Gastrocnemius medialis (tissue), 4 donors: ENCODE measurements at regions of chr13 and their contacts with region 1.

Region 1: DNA sequence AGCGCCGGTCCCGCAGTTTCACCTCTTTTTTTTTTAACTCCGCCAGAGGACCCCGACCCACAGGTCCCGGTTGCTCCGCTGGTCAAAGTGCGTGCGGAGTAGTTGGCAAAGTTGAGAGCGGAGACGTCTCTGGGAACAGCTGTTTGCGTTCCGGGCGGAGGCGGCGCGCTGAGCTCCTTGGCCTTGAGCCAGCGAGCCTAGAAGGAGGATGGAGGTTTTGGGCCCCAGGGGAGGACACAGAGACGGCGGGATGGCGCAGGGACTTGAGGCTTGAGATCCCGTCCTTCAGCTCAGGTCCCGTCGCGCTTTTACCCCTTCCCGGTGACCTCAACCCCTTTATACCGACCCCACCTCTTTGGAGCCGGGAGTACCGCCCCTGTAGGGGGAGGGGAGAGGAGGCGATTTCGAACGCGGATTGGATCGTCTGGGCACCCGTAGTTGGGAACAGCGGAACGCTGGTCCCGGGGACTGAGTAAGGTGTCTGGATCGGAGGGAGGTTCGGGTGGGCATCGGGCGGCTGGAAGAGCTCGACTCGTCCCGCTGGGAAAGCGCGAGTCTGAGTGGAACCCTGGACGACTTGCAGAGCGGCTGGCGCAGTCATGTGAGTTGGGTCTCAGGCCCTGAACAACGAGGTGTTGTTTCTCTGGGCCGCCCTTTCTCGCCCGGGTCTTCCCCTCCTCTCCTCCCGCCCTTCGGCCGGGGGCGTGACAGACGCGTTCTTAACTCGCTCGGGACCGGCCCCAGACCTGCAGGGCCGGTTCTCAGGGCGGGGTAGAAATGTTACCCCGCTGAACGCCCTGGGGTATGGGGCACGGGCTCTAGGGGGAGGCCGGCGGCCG is at the start of gene WBP4:
- DNase-seq: peak; percentile 91 to 93
- ATAC-seq: peak; percentile 74 to 76
- H3K4me3 ChIP-seq: peak within 1 kb of the TSS; percentile 71 to 90 (median 86)
- H3K27ac ChIP-seq: peak within 1 kb of the TSS; percentile 90 to 100 (median 98)
- H3K4me1 ChIP-seq: peaks cover 64 to 67% of the 10 kb centered on the region in 2 donors
- H3K27me3 ChIP-seq: no peaks in the 10 kb centered on the region
- CTCF ChIP-seq: peak in 2 of 5 experiments; percentile 3 to 24
- POLR2A ChIP-seq: peak; percentile 74 to 80
- total RNA-seq, gene WBP4: 20.2 to 31.3 (median 25.5) TPM

Region 2: GRCh38 chr13:40770934-40771618 is 290.2 kb before region 1 on chr13 and contains the start of gene MRPS31:
- in situ Hi-C with region 1: loop called in 1 of 4 experiments (anchors 25 kb)
- intact Hi-C with region 1: loop called (anchors 5 kb)
- DNase-seq: peak; percentile 89 to 94
- ATAC-seq: peak; percentile 93 to 97
- H3K4me3 ChIP-seq: peak within 1 kb of the TSS; percentile 74 to 95 (median 90)
- H3K27ac ChIP-seq: peak within 1 kb of the TSS; percentile 77 to 93 (median 90)
- H3K4me1 ChIP-seq: peaks cover 12 to 23% of the 10 kb centered on the region in 2 donors
- H3K27me3 ChIP-seq: no peaks in the 10 kb centered on the region
- CTCF ChIP-seq: peak in 2 of 5 experiments; percentile 11 to 30
- POLR2A ChIP-seq: peak; percentile 55 to 61
- total RNA-seq, gene MRPS31: 21.0 to 29.5 (median 24.8) TPM

Region 3: GRCh38 chr13:40974460-40975407 is 86.6 kb before region 1 on chr13:
- in situ Hi-C with region 1: loop called in 1 of 4 experiments (anchors 10 kb)
- intact Hi-C with region 1: loop called (anchors 2 kb)
- DNase-seq: peak in 1 of 2 donors; percentile 21
- ATAC-seq: peak; percentile 57 to 93
- H3K4me3 ChIP-seq: peak overlapping the region in 1 of 4 donors; percentile 3
- H3K27ac ChIP-seq: peak overlapping the region in 2 of 4 donors; percentile 3 to 22
- H3K4me1 ChIP-seq: peaks cover 70 to 92% of the 10 kb centered on the region in 2 donors
- H3K27me3 ChIP-seq: no peaks in the 10 kb centered on the region
- CTCF ChIP-seq: peak in 4 of 5 experiments; percentile 24 to 52 (median 35)
- POLR2A ChIP-seq: no peak

Region 4: GRCh38 chr13:41132512-41133152 is 71.3 kb after region 1 on chr13 and contains the start of gene KBTBD6:
- in situ Hi-C with region 1: loop called in 1 of 4 experiments (anchors 5 kb)
- intact Hi-C with region 1: loop called (anchors 1 kb)
- DNase-seq: peak; percentile 95 to 96
- ATAC-seq: peak; percentile 97
- H3K4me3 ChIP-seq: peak within 1 kb of the TSS; percentile 81 to 88 (median 83)
- H3K27ac ChIP-seq: peak within 1 kb of the TSS; percentile 92 to 94 (median 94)
- H3K4me1 ChIP-seq: peaks cover 47 to 50% of the 10 kb centered on the region in 2 donors
- H3K27me3 ChIP-seq: no peaks in the 10 kb centered on the region
- CTCF ChIP-seq: no peak
- POLR2A ChIP-seq: peak; percentile 65 to 72
- total RNA-seq, gene KBTBD6: 3.7 to 6.1 (median 5.3) TPM

Region 5: DNA sequence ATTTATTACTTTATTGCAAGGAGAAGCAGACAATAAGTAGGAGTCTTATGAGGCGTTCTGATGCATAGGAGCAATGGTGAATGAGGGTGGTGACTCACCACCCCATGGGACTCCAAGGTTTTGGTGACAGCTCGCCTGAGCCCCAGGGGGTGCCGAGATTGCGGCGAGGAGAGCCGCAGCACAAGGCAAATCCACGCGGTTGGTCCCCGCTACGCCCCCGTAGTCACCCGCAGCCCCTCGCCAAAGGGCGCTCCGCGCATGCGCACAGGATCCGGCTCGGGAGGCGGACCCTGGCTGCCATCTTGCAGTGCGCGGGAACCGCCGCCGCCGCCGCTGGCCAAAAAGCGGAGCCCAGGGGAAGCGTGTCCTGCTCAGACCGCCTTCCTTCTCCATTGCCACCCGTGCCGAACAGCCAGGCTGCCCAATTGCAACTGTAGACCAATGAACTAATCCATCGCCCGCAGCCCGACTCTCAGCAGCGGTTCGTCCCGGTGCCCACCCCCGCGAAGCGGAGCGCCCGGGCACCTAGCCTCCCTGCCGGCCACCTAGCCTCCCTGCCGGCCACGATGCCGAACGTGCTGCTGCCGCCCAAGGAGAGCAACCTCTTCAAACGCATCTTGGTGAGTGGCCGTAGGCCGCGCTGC is 249.8 kb after region 1 on chr13 and contains the start of gene NAA16:
- in situ Hi-C with region 1: no loop called
- intact Hi-C with region 1: loop called (anchors 1 kb)
- DNase-seq: peak; percentile 79 to 90
- ATAC-seq: peak; percentile 86 to 88
- H3K4me3 ChIP-seq: peak within 1 kb of the TSS; percentile 85 to 94 (median 90)
- H3K27ac ChIP-seq: peak within 1 kb of the TSS; percentile 93 to 96 (median 95)
- H3K4me1 ChIP-seq: peaks cover 26 to 34% of the 10 kb centered on the region in 2 donors
- H3K27me3 ChIP-seq: no peaks in the 10 kb centered on the region
- CTCF ChIP-seq: peak in 2 of 5 experiments; percentile 23 to 40
- POLR2A ChIP-seq: peak; percentile 89 to 90
- total RNA-seq, gene NAA16: 8.2 to 30.5 (median 11.6) TPM